PC-9 (cell line): ENCODE measurements at regions of chr17 and their contacts with region 1.

Region 1: DNA sequence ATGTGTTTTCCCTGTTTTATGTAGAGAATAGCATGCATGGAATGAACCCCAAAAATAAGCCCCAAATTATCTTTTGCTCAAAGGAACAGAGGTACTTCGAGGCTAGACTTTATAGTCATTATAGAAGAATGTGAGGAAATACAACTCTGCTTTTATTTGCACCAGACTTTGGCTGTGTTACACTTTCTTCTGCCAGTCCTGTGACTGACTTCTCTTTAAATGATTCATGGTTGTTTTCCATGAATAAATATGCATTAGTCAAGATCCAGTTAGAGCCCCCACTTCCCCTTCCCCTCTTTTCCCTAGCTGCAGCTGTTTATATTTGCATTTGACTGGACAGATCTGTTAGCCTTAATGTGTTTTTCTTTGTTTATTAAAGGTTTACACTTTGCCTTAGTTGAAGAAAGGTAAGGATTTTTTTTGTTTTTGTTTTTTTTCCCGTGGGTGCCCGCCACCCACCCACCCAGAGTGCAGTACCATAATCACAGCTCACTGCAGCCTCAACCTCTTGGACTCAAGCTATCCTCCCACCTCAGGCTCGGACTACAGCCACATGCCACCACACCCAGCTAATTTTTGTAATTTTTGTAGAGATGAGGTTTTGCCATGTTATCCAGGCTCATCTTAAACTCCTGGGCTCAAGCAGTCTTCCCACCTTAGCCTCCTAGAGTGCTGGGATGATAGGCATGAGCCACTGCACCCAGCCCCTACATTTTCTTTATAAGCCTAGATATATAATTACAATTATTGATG is 152.6 kb downstream of the CYB561 start:
- DNase-seq: no peak
- H3K4me3 ChIP-seq: no peak overlapping the region
- H3K27ac ChIP-seq: no peak overlapping the region
- H3K4me1 ChIP-seq: no peaks in the 10 kb centered on the region
- H3K27me3 ChIP-seq: no peaks in the 10 kb centered on the region
- CTCF ChIP-seq: no peak

Region 2: DNA sequence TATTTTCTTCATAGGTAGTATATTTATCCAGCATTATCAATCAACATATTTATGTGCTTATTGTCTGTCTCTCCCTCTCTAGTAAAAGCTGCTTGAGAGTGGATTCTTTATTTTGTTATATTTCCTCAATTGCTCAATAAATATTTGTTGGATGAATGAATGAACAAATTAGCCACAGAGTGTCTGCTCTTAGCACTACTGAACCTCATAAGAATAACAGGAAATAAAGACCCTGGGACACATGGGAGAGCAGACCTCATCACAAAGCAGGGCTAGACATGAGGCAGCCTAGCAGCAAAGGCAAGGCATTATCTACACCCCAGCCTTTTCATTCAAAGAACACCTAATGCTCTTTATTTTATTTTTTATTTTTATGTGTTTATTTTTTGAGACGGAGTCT is 362.4 kb before region 1 on chr17:
- CTCF ChIA-PET with region 1: no interaction called
- POLR2A ChIA-PET with region 1: no interaction called
- intact Hi-C with region 1: no loop called
- DNase-seq: peak in 1 of 2 experiments; percentile 48
- H3K4me3 ChIP-seq: no peak overlapping the region
- H3K27ac ChIP-seq: no peak overlapping the region
- H3K4me1 ChIP-seq: no peaks in the 10 kb centered on the region
- H3K27me3 ChIP-seq: no peaks in the 10 kb centered on the region
- CTCF ChIP-seq: no peak

Region 3: DNA sequence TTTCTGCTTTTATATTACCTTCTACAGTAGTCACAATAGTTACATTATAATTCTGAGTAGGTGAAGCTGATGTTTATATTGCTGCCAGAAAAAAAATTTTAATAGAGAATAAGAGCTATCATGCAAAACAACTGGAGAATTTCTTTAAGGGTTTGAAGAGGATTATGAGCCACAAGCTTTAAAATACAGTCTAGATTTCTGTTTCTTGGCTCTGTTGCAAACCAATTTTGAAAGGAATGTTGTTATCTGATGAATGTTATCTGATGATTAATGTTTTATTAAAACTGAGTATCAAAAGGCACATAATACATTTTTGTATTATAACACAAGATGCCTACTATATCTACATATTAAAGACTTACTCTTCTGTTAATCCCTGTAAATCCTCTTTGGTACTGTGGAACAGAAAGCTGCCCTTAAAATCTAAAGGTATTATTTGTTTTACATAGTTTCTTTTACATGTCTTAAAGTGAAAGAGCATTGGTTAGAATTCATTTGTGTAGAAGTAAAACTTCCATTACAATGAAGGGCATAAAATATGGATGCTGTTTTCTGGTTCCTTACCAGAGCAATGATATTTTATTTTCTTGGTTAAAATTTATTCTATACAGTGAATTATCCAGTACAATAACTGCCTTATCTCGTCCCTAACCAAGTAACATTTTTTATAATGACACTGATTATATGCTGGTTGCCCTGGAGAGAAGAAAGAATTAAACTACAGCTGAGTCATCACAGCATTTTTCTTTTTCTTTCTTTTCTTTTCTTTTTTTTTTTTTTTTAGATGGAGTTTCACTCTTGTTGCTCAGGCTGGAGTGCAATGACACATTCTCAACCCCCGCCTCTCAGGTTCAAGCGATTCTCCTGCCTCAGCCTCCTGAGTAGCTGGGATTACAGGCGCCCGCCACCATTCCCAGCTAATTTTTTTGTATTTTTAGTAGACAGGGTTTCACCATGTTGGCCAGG is 121.8 kb before region 1 on chr17:
- CTCF ChIA-PET with region 1: no interaction called
- POLR2A ChIA-PET with region 1: interaction called, 16 read pairs
- intact Hi-C with region 1: no loop called
- DNase-seq: no peak
- H3K4me3 ChIP-seq: no peak overlapping the region
- H3K27ac ChIP-seq: no peak overlapping the region
- H3K4me1 ChIP-seq: no peaks in the 10 kb centered on the region
- H3K27me3 ChIP-seq: no peaks in the 10 kb centered on the region
- CTCF ChIP-seq: no peak

Region 4: GRCh38 chr17:63345611-63346010 is 52.1 kb after region 1 on chr17:
- CTCF ChIA-PET with region 1: no interaction called
- POLR2A ChIA-PET with region 1: no interaction called
- intact Hi-C with region 1: no loop called
- DNase-seq: no peak
- H3K4me3 ChIP-seq: no peak overlapping the region
- H3K27ac ChIP-seq: no peak overlapping the region
- H3K4me1 ChIP-seq: no peaks in the 10 kb centered on the region
- H3K27me3 ChIP-seq: no peaks in the 10 kb centered on the region
- CTCF ChIP-seq: no peak

Region 5: DNA sequence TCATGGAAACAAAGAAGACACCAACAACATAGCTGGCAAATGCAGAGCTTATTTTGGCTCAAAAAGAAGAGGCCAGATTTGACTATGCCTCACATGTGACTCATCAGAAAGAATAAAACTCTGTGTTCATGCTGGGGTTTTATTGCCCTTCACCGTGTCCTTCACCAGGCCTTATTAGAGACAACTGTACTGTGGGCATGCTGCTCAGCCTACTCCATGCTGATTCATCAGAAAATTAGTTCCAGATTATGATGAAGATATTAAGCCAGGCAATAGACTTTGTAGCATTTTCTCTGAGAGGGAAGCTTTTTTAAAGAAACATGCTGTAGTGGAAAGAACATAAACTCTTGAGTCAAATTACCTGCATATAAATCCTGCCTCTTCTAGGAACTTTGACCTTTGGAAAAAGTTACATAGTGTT is 62.8 kb after region 1 on chr17:
- CTCF ChIA-PET with region 1: no interaction called
- POLR2A ChIA-PET with region 1: no interaction called
- intact Hi-C with region 1: no loop called
- DNase-seq: no peak
- H3K4me3 ChIP-seq: no peak overlapping the region
- H3K27ac ChIP-seq: no peak overlapping the region
- H3K4me1 ChIP-seq: no peaks in the 10 kb centered on the region
- H3K27me3 ChIP-seq: no peaks in the 10 kb centered on the region
- CTCF ChIP-seq: no peak